Activated B cell treated with CpG ODN at 0.5 μM for 24 hours (primary cell): ENCODE measurements at regions of chr10 and their contacts with region 1.

Region 1: DNA sequence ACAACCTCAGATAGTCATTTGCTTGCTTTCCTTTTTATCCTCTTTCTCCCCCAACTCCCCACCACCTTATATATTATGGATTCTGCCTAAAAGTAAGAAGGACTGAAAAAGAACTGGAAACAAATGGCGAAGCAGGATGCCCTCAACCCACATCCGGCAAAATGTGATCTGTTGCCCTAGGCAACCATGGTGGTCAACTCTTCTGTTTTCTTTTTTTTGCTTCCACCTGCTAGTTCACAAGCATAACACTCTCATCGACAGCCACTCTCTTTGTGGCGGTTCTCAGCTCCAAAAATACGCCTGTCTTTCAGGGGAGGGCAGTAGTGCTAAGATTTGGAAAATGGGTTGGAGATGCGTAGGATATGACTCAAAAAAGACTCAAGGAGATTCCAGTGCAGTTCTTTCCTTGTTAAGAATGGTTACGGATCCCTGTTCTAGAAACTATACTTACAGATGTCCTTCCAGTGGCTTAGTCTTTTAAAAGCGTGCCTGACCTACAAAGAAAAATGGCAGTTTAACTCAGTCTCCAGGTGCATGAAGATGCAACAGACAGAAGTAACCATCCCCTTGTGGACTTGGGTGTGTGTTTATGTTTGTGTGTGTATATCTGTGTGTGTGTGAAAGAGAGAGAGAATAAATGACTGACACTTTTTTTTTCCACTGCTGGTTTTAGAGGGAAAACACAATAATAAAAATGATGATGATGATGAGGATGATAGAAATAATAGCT is 10.7 kb downstream of the APBB1IP start:
- DNase-seq: peak; percentile 43
- ATAC-seq: peak; percentile 66
- H3K4me3 Mint-ChIP-seq: peak overlapping the region; percentile 75
- H3K27ac Mint-ChIP-seq: peak overlapping the region; percentile 97
- H3K4me1 Mint-ChIP-seq: peaks cover 92% of the 10 kb centered on the region
- H3K27me3 Mint-ChIP-seq: no peaks in the 10 kb centered on the region
- CTCF ChIP-seq: no peak

Region 2: GRCh38 chr10:26430641-26431164 is 18.2 kb before region 1 on chr10:
- CTCF ChIA-PET with region 1: no interaction called
- POLR2A ChIA-PET with region 1: interaction called, 6 read pairs
- intact Hi-C with region 1: loop called (anchors 2 kb)
- DNase-seq: no peak
- ATAC-seq: peak; percentile 95
- H3K4me3 Mint-ChIP-seq: peak overlapping the region; percentile 74
- H3K27ac Mint-ChIP-seq: peak overlapping the region; percentile 94
- H3K4me1 Mint-ChIP-seq: peaks cover 19% of the 10 kb centered on the region
- H3K27me3 Mint-ChIP-seq: no peaks in the 10 kb centered on the region
- CTCF ChIP-seq: no peak

Region 3: GRCh38 chr10:26481914-26482550 is 33.2 kb after region 1 on chr10:
- CTCF ChIA-PET with region 1: interaction called, 4 read pairs
- POLR2A ChIA-PET with region 1: interaction called, 11 read pairs
- intact Hi-C with region 1: loop called (anchors 1 kb)
- DNase-seq: no peak
- ATAC-seq: peak; percentile 79
- H3K4me3 Mint-ChIP-seq: peak overlapping the region; percentile 46
- H3K27ac Mint-ChIP-seq: peak overlapping the region; percentile 83
- H3K4me1 Mint-ChIP-seq: peaks cover 82% of the 10 kb centered on the region
- H3K27me3 Mint-ChIP-seq: no peaks in the 10 kb centered on the region
- CTCF ChIP-seq: no peak

Region 4: DNA sequence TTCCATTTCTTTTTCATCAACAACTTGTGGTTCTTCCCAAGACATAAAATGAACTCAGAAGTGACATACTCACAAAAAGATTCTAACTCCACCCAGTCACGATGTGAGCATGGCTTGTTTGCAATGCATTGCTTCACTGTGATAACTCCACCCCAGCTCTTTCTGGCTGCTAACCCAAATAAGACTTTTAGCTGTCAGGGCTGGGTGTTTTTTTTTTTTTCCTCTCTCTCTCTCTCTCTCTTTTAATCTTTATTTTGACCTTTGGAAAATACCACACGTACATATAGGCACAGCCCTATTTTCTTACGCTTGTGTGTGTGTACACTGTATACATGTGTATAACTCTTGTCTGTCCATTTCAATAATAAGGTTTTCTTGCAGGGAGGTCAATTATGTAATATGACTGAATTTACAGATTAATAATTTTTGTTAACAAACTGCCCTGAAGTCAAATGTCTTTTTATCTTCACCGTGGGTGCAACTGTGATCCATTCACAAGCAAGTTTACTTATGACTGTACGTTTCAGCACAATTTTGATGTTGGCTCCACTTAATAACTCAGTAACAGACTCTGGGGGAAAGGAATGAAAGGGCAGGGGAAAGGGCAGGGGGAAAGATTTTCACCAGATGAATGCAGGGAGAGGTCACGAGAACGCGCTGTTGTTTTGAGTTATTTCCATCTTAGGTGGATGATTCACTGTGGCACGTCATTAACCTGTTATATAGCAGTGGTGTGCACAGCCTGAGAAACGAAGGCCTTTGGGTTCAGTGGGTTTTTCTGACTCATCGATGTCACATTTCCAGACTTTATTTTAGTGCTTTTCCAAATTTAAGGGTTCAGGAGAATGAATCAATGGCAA is 38.4 kb after region 1 on chr10:
- CTCF ChIA-PET with region 1: no interaction called
- POLR2A ChIA-PET with region 1: interaction called, 6 read pairs
- intact Hi-C with region 1: loop called (anchors 1 kb)
- DNase-seq: no peak
- ATAC-seq: peak; percentile 82
- H3K4me3 Mint-ChIP-seq: peak overlapping the region; percentile 59
- H3K27ac Mint-ChIP-seq: peak overlapping the region; percentile 90
- H3K4me1 Mint-ChIP-seq: peaks cover 66% of the 10 kb centered on the region
- H3K27me3 Mint-ChIP-seq: no peaks in the 10 kb centered on the region
- CTCF ChIP-seq: no peak